Caco-2 (cell line): ENCODE measurements at regions of chr10 and their contacts with region 1.

Region 1: DNA sequence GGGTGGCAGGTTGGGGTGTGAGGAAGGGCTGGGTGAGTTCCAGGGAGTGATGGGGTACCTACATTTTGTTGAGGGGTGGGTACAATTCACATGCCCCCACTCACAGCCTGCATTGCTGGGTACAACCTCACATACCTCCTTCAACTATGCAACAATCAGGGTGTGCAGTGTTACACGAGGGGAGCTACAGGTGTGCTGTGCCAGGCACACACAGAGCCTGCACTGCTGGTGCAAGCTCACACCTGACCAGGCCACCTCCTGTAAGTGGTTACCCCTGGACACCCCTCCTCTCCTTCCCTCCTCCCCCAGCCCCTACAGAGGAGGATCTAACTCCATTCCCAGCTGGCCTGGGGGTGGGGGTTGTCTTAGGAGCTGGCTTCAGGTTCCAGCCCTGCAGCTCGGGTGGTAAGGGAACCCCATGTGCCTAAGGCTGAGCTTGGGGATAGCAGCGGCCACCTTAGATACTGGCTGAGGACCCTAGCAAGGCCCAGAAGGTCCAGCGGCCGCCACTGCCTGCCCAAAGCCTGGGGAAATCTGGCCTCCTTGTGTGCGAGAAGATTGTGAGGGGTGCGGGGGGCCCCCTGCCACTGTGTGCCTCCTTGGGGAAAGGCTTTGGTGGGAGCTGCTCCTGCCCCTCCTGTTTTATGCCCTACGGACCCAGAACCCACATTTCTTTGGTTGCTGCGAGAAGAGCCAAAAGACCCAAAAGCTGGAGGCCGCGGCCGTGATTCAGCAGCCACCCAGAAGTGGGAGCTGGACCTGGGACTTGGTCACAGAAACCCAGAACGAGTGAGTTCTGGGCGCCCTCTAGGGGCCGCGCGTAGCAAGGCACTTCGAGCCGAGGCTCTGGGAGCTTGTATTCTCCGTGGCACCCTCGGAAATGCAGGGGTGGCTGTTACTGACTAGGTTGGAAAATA is 10.8 kb downstream of the TLX1 start:
- DNase-seq: peak; percentile 83 to 88
- H3K4me3 ChIP-seq: no peak overlapping the region
- H3K4me3 Mint-ChIP-seq: no peak overlapping the region
- H3K27ac Mint-ChIP-seq: no peak overlapping the region
- H3K4me1 ChIP-seq: peaks cover 9% of the 10 kb centered on the region
- H3K4me1 Mint-ChIP-seq: no peaks in the 10 kb centered on the region
- H3K27me3 ChIP-seq: no peaks in the 10 kb centered on the region
- H3K27me3 Mint-ChIP-seq: peaks cover 3% of the 10 kb centered on the region
- CTCF ChIP-seq: peak; percentile 97 to 98

Region 2: GRCh38 chr10:100934084-100934659 is 207.7 kb before region 1 on chr10:
- CTCF ChIA-PET with region 1: no interaction called
- POLR2A ChIA-PET with region 1: no interaction called
- intact Hi-C with region 1: no loop called
- DNase-seq: no peak
- H3K4me3 ChIP-seq: no peak overlapping the region
- H3K4me3 Mint-ChIP-seq: no peak overlapping the region
- H3K27ac Mint-ChIP-seq: no peak overlapping the region
- H3K4me1 ChIP-seq: no peaks in the 10 kb centered on the region
- H3K4me1 Mint-ChIP-seq: no peaks in the 10 kb centered on the region
- H3K27me3 ChIP-seq: no peaks in the 10 kb centered on the region
- H3K27me3 Mint-ChIP-seq: no peaks in the 10 kb centered on the region
- CTCF ChIP-seq: peak; percentile 55 to 75

Region 3: DNA sequence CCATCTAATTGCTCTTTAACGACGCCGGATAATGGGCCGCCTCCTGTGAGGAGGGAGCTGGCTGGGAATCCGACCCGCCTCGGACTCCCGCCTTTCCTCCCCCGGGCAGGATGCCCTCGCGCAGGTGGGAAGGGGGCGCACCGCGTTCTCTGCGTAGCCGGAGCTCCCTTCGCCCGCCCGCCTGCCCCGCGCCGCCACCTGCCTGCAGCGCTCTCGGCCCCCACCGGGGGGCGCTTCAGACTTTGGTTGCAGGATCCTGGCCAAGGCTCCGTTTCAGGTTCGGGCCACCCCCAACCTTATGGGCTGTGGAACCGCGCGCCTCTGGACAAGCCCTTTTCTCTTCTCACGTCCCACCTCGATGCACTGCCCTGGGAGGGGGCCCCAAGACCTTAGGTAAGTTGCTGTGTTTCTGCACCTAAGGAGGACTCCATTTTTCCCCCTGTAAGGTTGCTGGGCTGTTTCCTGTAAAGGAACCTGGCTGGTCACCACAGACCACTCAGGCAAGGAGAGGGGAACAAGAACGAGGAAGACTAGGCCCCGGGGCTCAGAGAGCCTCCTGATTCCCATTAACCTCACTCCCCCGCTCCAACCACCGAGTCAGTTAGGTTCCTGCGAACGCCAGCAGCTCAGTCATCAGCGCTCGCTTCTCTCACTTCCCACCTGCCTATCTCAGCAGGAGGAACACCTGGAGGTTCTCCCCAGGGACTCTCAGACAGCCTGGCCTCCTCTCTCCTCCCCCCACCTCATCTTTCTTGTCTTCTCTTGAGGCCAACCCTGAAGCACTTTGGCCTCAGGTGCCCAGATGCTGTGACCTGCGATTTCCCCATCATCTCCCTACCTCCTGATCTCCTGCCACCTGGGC is 91.4 kb before region 1 on chr10:
- CTCF ChIA-PET with region 1: interaction called, 10 read pairs
- POLR2A ChIA-PET with region 1: no interaction called
- intact Hi-C with region 1: no loop called
- DNase-seq: peak in 1 of 2 experiments; percentile 62
- H3K4me3 ChIP-seq: no peak overlapping the region
- H3K4me3 Mint-ChIP-seq: no peak overlapping the region
- H3K27ac Mint-ChIP-seq: no peak overlapping the region
- H3K4me1 ChIP-seq: no peaks in the 10 kb centered on the region
- H3K4me1 Mint-ChIP-seq: peaks cover 6% of the 10 kb centered on the region
- H3K27me3 ChIP-seq: no peaks in the 10 kb centered on the region
- H3K27me3 Mint-ChIP-seq: no peaks in the 10 kb centered on the region
- CTCF ChIP-seq: peak; percentile 33 to 71

Region 4: GRCh38 chr10:101067356-101068083 is 74.4 kb before region 1 on chr10:
- CTCF ChIA-PET with region 1: interaction called, 21 read pairs
- POLR2A ChIA-PET with region 1: interaction called, 4 read pairs
- intact Hi-C with region 1: no loop called
- DNase-seq: peak; percentile 90
- H3K4me3 ChIP-seq: peak overlapping the region; percentile 70
- H3K4me3 Mint-ChIP-seq: peak overlapping the region; percentile 96
- H3K27ac Mint-ChIP-seq: peak overlapping the region; percentile 98
- H3K4me1 ChIP-seq: peaks cover 30% of the 10 kb centered on the region
- H3K4me1 Mint-ChIP-seq: peaks cover 22% of the 10 kb centered on the region
- H3K27me3 ChIP-seq: no peaks in the 10 kb centered on the region
- H3K27me3 Mint-ChIP-seq: no peaks in the 10 kb centered on the region
- CTCF ChIP-seq: peak; percentile 86 to 92

Region 5: GRCh38 chr10:101085846-101086245 is 56.0 kb before region 1 on chr10:
- CTCF ChIA-PET with region 1: interaction called, 10 read pairs
- POLR2A ChIA-PET with region 1: no interaction called
- intact Hi-C with region 1: no loop called
- DNase-seq: no peak
- H3K4me3 ChIP-seq: no peak overlapping the region
- H3K4me3 Mint-ChIP-seq: no peak overlapping the region
- H3K27ac Mint-ChIP-seq: no peak overlapping the region
- H3K4me1 ChIP-seq: no peaks in the 10 kb centered on the region
- H3K4me1 Mint-ChIP-seq: peaks cover 8% of the 10 kb centered on the region
- H3K27me3 ChIP-seq: no peaks in the 10 kb centered on the region; the same call in 1 of the 2 replicates
- H3K27me3 Mint-ChIP-seq: peaks cover 8% of the 10 kb centered on the region
- CTCF ChIP-seq: no peak

Region 6: GRCh38 chr10:101110856-101111546 is 30.9 kb before region 1 on chr10:
- CTCF ChIA-PET with region 1: interaction called, 45 read pairs
- POLR2A ChIA-PET with region 1: interaction called, 3 read pairs
- intact Hi-C with region 1: no loop called
- DNase-seq: peak; percentile 76 to 78
- H3K4me3 ChIP-seq: no peak overlapping the region
- H3K4me3 Mint-ChIP-seq: peak overlapping the region; percentile 44
- H3K27ac Mint-ChIP-seq: peak overlapping the region; percentile 92
- H3K4me1 ChIP-seq: peaks cover 30% of the 10 kb centered on the region
- H3K4me1 Mint-ChIP-seq: peaks cover 36% of the 10 kb centered on the region
- H3K27me3 ChIP-seq: no peaks in the 10 kb centered on the region
- H3K27me3 Mint-ChIP-seq: no peaks in the 10 kb centered on the region
- CTCF ChIP-seq: no peak

Region 7: GRCh38 chr10:101152316-101152715 is 10.4 kb after region 1 on chr10:
- CTCF ChIA-PET with region 1: interaction called, 13 read pairs
- POLR2A ChIA-PET with region 1: no interaction called
- intact Hi-C with region 1: no loop called
- DNase-seq: no peak
- H3K4me3 ChIP-seq: no peak overlapping the region
- H3K4me3 Mint-ChIP-seq: no peak overlapping the region
- H3K27ac Mint-ChIP-seq: no peak overlapping the region
- H3K4me1 ChIP-seq: 0 out of 2 replicates have a peak, but pooled peaks cover 1% of the 10 kb centered on the region
- H3K4me1 Mint-ChIP-seq: no peaks in the 10 kb centered on the region
- H3K27me3 ChIP-seq: no peaks in the 10 kb centered on the region
- H3K27me3 Mint-ChIP-seq: peaks cover 9% of the 10 kb centered on the region
- CTCF ChIP-seq: no peak

Region 8: GRCh38 chr10:101228153-101228973 is 86.5 kb after region 1 on chr10:
- CTCF ChIA-PET with region 1: no interaction called
- POLR2A ChIA-PET with region 1: no interaction called
- intact Hi-C with region 1: no loop called
- DNase-seq: no peak
- H3K4me3 ChIP-seq: peak overlapping the region; percentile 5; the same call in 1 of the 2 replicates
- H3K4me3 Mint-ChIP-seq: peak overlapping the region; percentile 64
- H3K27ac Mint-ChIP-seq: no peak overlapping the region
- H3K4me1 ChIP-seq: peaks cover 12% of the 10 kb centered on the region; the same call in 1 of the 2 replicates
- H3K4me1 Mint-ChIP-seq: peaks cover 14% of the 10 kb centered on the region
- H3K27me3 ChIP-seq: peaks cover 17% of the 10 kb centered on the region
- H3K27me3 Mint-ChIP-seq: peaks cover 57% of the 10 kb centered on the region
- CTCF ChIP-seq: no peak